Common myeloid progenitor, CD34-positive (primary cell): ENCODE measurements at regions of chr2 and their contacts with region 1.

Region 1: GRCh38 chr2:19347619-19348562 is 10.5 kb downstream of the OSR1 start:
- DNase-seq: peak; percentile 97 to 99 (median 98)
- H3K4me3 ChIP-seq: peak overlapping the region; percentile 87 to 99 (median 95)
- H3K27ac ChIP-seq: peak overlapping the region; percentile 75 to 91
- H3K4me1 ChIP-seq: peaks cover 2 to 29% (median 22%) of the 10 kb centered on the region in 4 experiments
- H3K27me3 ChIP-seq: peaks cover 0 to 47% (median 29%) of the 10 kb centered on the region in 5 experiments

Region 2: DNA sequence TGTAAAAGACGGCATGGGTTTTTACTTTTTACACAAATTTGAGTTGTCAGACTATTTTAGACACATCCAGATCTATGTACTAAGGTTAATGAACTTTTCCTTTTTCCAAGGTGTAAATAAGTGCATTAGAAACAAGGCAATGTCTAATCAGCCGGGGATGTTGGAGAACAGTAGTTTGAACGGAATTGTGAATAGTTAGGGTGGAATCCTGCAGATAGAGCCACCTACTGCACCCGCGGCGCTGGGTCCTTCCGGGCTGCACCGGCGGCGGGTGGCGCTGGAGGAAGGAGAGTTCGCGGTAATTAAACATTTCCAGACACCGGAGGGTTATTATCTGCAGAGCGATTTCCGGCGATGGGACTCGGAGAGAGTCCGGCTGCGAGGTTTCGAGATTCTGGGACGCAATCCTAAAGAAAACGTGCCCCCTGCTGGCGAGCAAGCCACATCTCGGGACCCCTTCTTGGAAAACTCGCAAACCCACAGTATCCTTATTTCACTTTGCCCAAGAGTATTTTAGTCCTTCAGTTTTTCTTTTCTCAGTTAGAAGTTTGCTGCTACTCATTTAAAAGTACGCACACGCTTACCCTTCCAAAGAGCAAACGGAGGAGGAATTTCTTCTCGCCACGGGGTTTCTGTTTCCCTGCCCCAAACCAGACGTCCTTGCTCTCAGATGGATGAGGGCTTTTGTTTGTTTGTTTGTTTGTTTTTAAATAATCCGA is 15.0 kb after region 1 on chr2:
- CTCF ChIA-PET with region 1: interaction called, 63 read pairs
- POLR2A ChIA-PET with region 1: no interaction called
- DNase-seq: no peak
- H3K4me3 ChIP-seq: peak overlapping the region in 6 of 7 experiments; percentile 47 to 98 (median 74)
- H3K27ac ChIP-seq: no peak overlapping the region
- H3K4me1 ChIP-seq: peaks cover 8 to 34% (median 24%) of the 10 kb centered on the region in 4 experiments
- H3K27me3 ChIP-seq: peaks cover 28 to 96% (median 55%) of the 10 kb centered on the region in 5 experiments